ENCODE measurements at regions of chr18 and their contacts with region 1.

Region 1: GRCh38 chr18:70454704-70455322 is 166.0 kb downstream of the SOCS6 start:
- DNase-seq: peak; percentile 28 to 72 (median 47)
- ATAC-seq: peak; percentile 83
- H3K4me3 ChIP-seq: no peak overlapping the region
- H3K27ac ChIP-seq: no peak overlapping the region
- H3K4me1 ChIP-seq: no peaks in the 10 kb centered on the region
- H3K27me3 ChIP-seq: no peaks in the 10 kb centered on the region
- CTCF ChIP-seq: peak; percentile 41 to 70 (median 61)
- EP300 ChIP-seq: no peak
- POLR2A ChIP-seq: no peak
- RAD21 ChIP-seq: peak; percentile 65 to 70

Region 2: DNA sequence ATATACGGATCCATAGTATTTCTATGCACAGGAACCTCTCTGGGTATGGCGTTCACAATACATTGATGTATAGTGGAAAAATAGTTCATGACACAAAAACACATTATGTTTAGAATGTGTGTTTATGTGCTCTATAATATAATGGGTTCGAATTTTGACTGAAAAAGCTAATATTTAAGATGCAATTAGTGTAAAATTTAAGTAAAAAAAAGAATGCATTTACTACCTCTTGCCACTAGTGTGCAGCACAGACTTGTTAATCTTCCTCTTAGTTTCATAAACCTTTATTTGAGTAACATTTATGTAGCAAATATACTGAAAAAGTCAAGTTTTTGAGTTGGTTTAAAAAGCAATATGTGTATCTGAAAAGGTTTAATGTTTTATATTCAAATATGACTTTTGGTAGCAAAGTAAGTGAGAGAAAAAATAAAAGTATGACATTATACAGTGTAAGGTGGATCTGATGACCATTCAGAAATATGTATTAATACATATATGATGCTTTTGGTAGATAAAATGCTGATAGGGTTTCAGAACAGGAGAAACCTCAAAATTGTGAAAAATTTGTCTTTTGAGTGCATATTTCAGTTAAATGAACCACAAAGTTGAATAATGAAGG is 1607.5 kb before region 1 on chr18:
- CTCF ChIA-PET with region 1: no interaction called
- POLR2A ChIA-PET with region 1: no interaction called
- in situ Hi-C with region 1: no loop called
- intact Hi-C with region 1: loop called (anchors 5 kb)
- DNase-seq: peak in 1 of 4 experiments; percentile 1
- ATAC-seq: no peak
- H3K4me3 ChIP-seq: no peak overlapping the region
- H3K27ac ChIP-seq: no peak overlapping the region
- H3K4me1 ChIP-seq: no peaks in the 10 kb centered on the region
- H3K27me3 ChIP-seq: no peaks in the 10 kb centered on the region
- CTCF ChIP-seq: peak in 1 of 3 experiments; percentile 33; a peak in 2 of 6 replicates
- EP300 ChIP-seq: no peak
- POLR2A ChIP-seq: no peak
- RAD21 ChIP-seq: peak; percentile 19 to 56; a peak in 3 of 4 replicates

Region 3: DNA sequence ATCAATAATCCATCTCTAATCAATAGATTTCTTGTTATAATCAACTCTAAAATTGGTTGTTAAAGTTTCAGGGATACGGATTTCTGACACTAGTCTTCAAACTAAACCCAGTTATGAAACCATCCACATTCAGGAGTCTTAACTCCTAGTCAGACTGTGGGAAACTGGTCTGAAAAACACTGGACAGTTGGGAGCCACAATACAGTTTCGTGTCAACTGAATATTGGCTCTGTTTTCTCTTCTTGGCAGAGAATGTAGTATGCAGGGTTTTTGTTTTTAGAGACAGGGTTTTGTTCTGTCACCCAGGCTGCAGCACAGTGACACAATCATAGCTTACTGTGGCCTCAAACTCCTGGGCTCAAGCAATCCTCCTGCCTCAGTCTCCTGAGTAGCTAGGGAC is 372.4 kb before region 1 on chr18:
- CTCF ChIA-PET with region 1: no interaction called
- POLR2A ChIA-PET with region 1: no interaction called
- in situ Hi-C with region 1: no loop called
- intact Hi-C with region 1: loop called (anchors 2 kb)
- DNase-seq: no peak
- ATAC-seq: no peak
- H3K4me3 ChIP-seq: no peak overlapping the region
- H3K27ac ChIP-seq: no peak overlapping the region
- H3K4me1 ChIP-seq: no peaks in the 10 kb centered on the region
- H3K27me3 ChIP-seq: no peaks in the 10 kb centered on the region
- CTCF ChIP-seq: no peak
- EP300 ChIP-seq: no peak
- POLR2A ChIP-seq: no peak
- RAD21 ChIP-seq: no peak

Region 4: DNA sequence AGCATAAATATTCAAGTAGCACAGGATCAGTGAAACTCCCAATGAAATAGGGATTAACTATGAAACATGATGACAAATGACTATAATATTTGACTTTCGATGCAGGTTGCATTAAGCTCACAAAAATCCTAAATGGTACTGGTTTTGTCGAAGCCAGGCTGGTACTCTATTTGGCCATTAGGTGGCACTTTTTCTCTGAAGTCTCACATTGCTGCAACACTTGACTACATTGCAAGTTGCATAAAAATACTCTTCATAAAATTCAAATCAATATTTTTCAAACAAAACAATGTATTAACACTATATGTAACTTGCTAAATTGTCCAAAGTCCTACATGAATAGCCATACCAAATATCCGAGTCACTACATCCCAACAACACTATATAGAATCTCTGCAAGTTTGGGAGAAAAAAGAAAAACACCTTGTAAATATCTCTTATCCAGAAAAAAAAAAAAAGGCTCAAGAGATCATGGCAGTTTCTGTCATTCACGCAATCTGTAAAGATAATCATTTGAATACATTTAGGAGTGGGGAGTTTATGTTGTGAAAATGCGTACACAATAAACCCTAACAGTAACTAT is 258.9 kb before region 1 on chr18:
- CTCF ChIA-PET with region 1: interaction called, 11 read pairs
- POLR2A ChIA-PET with region 1: no interaction called
- in situ Hi-C with region 1: no loop called
- intact Hi-C with region 1: loop called (anchors 1 kb)
- DNase-seq: peak in 3 of 4 experiments; percentile 12 to 29 (median 16)
- ATAC-seq: peak; percentile 72
- H3K4me3 ChIP-seq: no peak overlapping the region
- H3K27ac ChIP-seq: no peak overlapping the region
- H3K4me1 ChIP-seq: no peaks in the 10 kb centered on the region
- H3K27me3 ChIP-seq: no peaks in the 10 kb centered on the region
- CTCF ChIP-seq: peak; percentile 50 to 66 (median 51); a peak in 5 of 6 replicates
- EP300 ChIP-seq: no peak
- POLR2A ChIP-seq: no peak
- RAD21 ChIP-seq: peak; percentile 76 to 77